IMR-90 (cell line): ENCODE measurements at regions of chr7 and their contacts with region 1.

Region 1: GRCh38 chr7:131107337-131108211 is 220.1 kb upstream of the MKLN1 start:
- DNase-seq: peak; percentile 83
- ATAC-seq: peak; percentile 4
- H3K4me3 ChIP-seq: peak overlapping the region; percentile 80
- H3K27ac ChIP-seq: peak overlapping the region; percentile 86
- H3K4me1 ChIP-seq: peaks cover 7% of the 10 kb centered on the region
- H3K27me3 ChIP-seq: no peaks in the 10 kb centered on the region
- CTCF ChIP-seq: no peak
- POLR2A ChIP-seq: peak; percentile 81
- RAD21 ChIP-seq: peak; percentile 15

Region 2: GRCh38 chr7:131071786-131072504 is 35.6 kb before region 1 on chr7:
- CTCF ChIA-PET with region 1: interaction called, 4 read pairs
- POLR2A ChIA-PET with region 1: interaction called, 4 read pairs
- dilution Hi-C with region 1: no loop called
- in situ Hi-C with region 1: no loop called
- intact Hi-C with region 1: loop called (anchors 2 kb)
- DNase-seq: peak; percentile 38
- ATAC-seq: no peak
- H3K4me3 ChIP-seq: no peak overlapping the region
- H3K27ac ChIP-seq: no peak overlapping the region
- H3K4me1 ChIP-seq: peaks cover 19% of the 10 kb centered on the region
- H3K27me3 ChIP-seq: no peaks in the 10 kb centered on the region
- CTCF ChIP-seq: peak; percentile 46
- POLR2A ChIP-seq: no peak
- RAD21 ChIP-seq: peak; percentile 27; the same call in 1 of the 2 replicates

Region 3: GRCh38 chr7:131145026-131145425 is 37.5 kb after region 1 on chr7:
- CTCF ChIA-PET with region 1: no interaction called
- POLR2A ChIA-PET with region 1: no interaction called
- dilution Hi-C with region 1: no loop called
- in situ Hi-C with region 1: no loop called
- intact Hi-C with region 1: no loop called
- DNase-seq: peak; percentile 34
- ATAC-seq: no peak
- H3K4me3 ChIP-seq: no peak overlapping the region
- H3K27ac ChIP-seq: no peak overlapping the region
- H3K4me1 ChIP-seq: no peaks in the 10 kb centered on the region
- H3K27me3 ChIP-seq: no peaks in the 10 kb centered on the region
- CTCF ChIP-seq: no peak
- POLR2A ChIP-seq: no peak
- RAD21 ChIP-seq: no peak

Region 4: GRCh38 chr7:131225619-131226513 is 118.3 kb after region 1 on chr7:
- CTCF ChIA-PET with region 1: no interaction called
- POLR2A ChIA-PET with region 1: no interaction called
- dilution Hi-C with region 1: no loop called
- in situ Hi-C with region 1: no loop called
- intact Hi-C with region 1: loop called (anchors 5 kb)
- DNase-seq: peak; percentile 61
- ATAC-seq: peak; percentile 86
- H3K4me3 ChIP-seq: no peak overlapping the region
- H3K27ac ChIP-seq: peak overlapping the region; percentile 62; the same call in 1 of the 2 replicates
- H3K4me1 ChIP-seq: peaks cover 4% of the 10 kb centered on the region
- H3K27me3 ChIP-seq: no peaks in the 10 kb centered on the region
- CTCF ChIP-seq: no peak
- POLR2A ChIP-seq: no peak
- RAD21 ChIP-seq: no peak

Region 5: GRCh38 chr7:131327626-131328376 is 220.2 kb after region 1 on chr7 and contains the start of gene MKLN1:
- CTCF ChIA-PET with region 1: no interaction called
- POLR2A ChIA-PET with region 1: no interaction called
- dilution Hi-C with region 1: no loop called
- in situ Hi-C with region 1: no loop called
- intact Hi-C with region 1: loop called (anchors 1 kb)
- DNase-seq: peak; percentile 85
- ATAC-seq: peak; percentile 95
- H3K4me3 ChIP-seq: peak within 1 kb of the TSS; percentile 96
- H3K27ac ChIP-seq: peak within 1 kb of the TSS; percentile 100
- H3K4me1 ChIP-seq: peaks cover 7% of the 10 kb centered on the region; the same call in 1 of the 2 replicates
- H3K27me3 ChIP-seq: no peaks in the 10 kb centered on the region
- CTCF ChIP-seq: no peak
- POLR2A ChIP-seq: peak; percentile 93
- RAD21 ChIP-seq: no peak; the same call in 1 of the 2 replicates
- total RNA-seq, gene MKLN1: 52.0 and 65.8 TPM in 2 replicates

Region 6: DNA sequence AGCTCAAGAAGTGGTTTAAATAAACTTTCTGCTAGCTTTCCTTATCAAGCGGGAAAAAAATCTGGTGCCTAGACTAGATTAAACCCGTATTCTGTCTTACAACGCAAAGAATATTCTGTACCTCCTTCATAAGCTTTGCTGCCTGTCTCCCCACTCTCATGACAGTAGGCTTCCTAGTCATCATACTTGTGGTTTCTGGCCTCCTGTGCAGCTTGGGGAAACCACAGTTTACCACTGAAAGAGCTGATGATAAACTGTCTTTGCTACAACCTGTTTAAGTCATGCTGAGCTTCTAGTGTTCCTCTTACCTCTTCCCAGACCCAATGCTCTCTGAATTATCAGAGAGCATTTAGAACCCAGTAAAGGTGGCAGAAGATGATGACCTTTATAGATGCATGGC is 393.8 kb after region 1 on chr7:
- CTCF ChIA-PET with region 1: no interaction called
- POLR2A ChIA-PET with region 1: no interaction called
- dilution Hi-C with region 1: no loop called
- in situ Hi-C with region 1: no loop called
- intact Hi-C with region 1: loop called (anchors 2 kb)
- DNase-seq: peak; percentile 92
- ATAC-seq: peak; percentile 68
- H3K4me3 ChIP-seq: no peak overlapping the region
- H3K27ac ChIP-seq: no peak overlapping the region
- H3K4me1 ChIP-seq: peaks cover 26% of the 10 kb centered on the region
- H3K27me3 ChIP-seq: no peaks in the 10 kb centered on the region
- CTCF ChIP-seq: no peak
- POLR2A ChIP-seq: no peak
- RAD21 ChIP-seq: no peak

Region 7: GRCh38 chr7:131654668-131655326 is 547.2 kb after region 1 on chr7:
- CTCF ChIA-PET with region 1: no interaction called
- POLR2A ChIA-PET with region 1: no interaction called
- dilution Hi-C with region 1: no loop called
- in situ Hi-C with region 1: no loop called
- intact Hi-C with region 1: loop called (anchors 5 kb)
- DNase-seq: peak; percentile 72
- ATAC-seq: peak; percentile 100
- H3K4me3 ChIP-seq: no peak overlapping the region
- H3K27ac ChIP-seq: no peak overlapping the region
- H3K4me1 ChIP-seq: no peaks in the 10 kb centered on the region
- H3K27me3 ChIP-seq: peaks cover 2% of the 10 kb centered on the region; the same call in 1 of the 2 replicates
- CTCF ChIP-seq: peak; percentile 94
- POLR2A ChIP-seq: peak; percentile 47
- RAD21 ChIP-seq: peak; percentile 96